K562 (cell line): ENCODE measurements at regions of chr17 and their contacts with region 1.

Region 1: GRCh38 chr17:28763804-28764266 is 20.0 kb downstream of the TRAF4 start:
- DNase-seq: peak; percentile 73 to 87 (median 78)
- ATAC-seq: peak; percentile 86
- H3K4me3 ChIP-seq: no peak overlapping the region
- H3K27ac ChIP-seq: no peak overlapping the region
- H3K4me1 ChIP-seq: peaks cover 3% of the 10 kb centered on the region in 2 experiments; a peak in 2 of 5 replicates
- H3K27me3 ChIP-seq: no peaks in the 10 kb centered on the region
- CTCF ChIP-seq: peak; percentile 83 to 95 (median 91)
- EP300 ChIP-seq: no peak
- POLR2A ChIP-seq: no peak
- RAD21 ChIP-seq: peak; percentile 84 to 92

Region 2: GRCh38 chr17:28667870-28668269 is 96.0 kb before region 1 on chr17:
- CTCF ChIA-PET with region 1: no interaction called
- POLR2A ChIA-PET with region 1: no interaction called
- in situ Hi-C with region 1: no loop called
- intact Hi-C with region 1: no loop called
- DNase-seq: no peak
- ATAC-seq: peak; percentile 29; the same call in 1 of the 3 replicates
- H3K4me3 ChIP-seq: no peak overlapping the region
- H3K27ac ChIP-seq: no peak overlapping the region
- H3K4me1 ChIP-seq: peaks cover 4 to 5% of the 10 kb centered on the region in 2 experiments; a peak in 2 of 5 replicates
- H3K27me3 ChIP-seq: no peaks in the 10 kb centered on the region
- CTCF ChIP-seq: no peak
- EP300 ChIP-seq: no peak
- POLR2A ChIP-seq: no peak
- RAD21 ChIP-seq: no peak

Region 3: GRCh38 chr17:28750178-28751047 is 13.4 kb before region 1 on chr17:
- CTCF ChIA-PET with region 1: no interaction called
- POLR2A ChIA-PET with region 1: interaction called, 47 read pairs
- in situ Hi-C with region 1: no loop called
- intact Hi-C with region 1: no loop called
- DNase-seq: peak; percentile 80 to 98 (median 87)
- ATAC-seq: peak; percentile 87
- H3K4me3 ChIP-seq: no peak overlapping the region
- H3K27ac ChIP-seq: peak overlapping the region; percentile 37; the same call in 2 of the 3 replicates
- H3K4me1 ChIP-seq: peaks cover 20 to 36% of the 10 kb centered on the region in 2 experiments
- H3K27me3 ChIP-seq: no peaks in the 10 kb centered on the region
- CTCF ChIP-seq: peak; percentile 100
- EP300 ChIP-seq: no peak
- POLR2A ChIP-seq: peak; percentile 48; the same call in 1 of the 2 replicates
- RAD21 ChIP-seq: peak; percentile 99

Region 4: GRCh38 chr17:28842282-28843012 is 78.6 kb after region 1 on chr17 and contains the start of gene FAM222B:
- CTCF ChIA-PET with region 1: no interaction called
- POLR2A ChIA-PET with region 1: interaction called, 12 read pairs
- in situ Hi-C with region 1: no loop called
- intact Hi-C with region 1: loop called (anchors 2 kb)
- DNase-seq: peak; percentile 95 to 100 (median 99)
- ATAC-seq: peak; percentile 97
- H3K4me3 ChIP-seq: peak within 1 kb of the TSS; percentile 71
- H3K27ac ChIP-seq: peak within 1 kb of the TSS; percentile 76
- H3K4me1 ChIP-seq: peaks cover 17 to 33% of the 10 kb centered on the region in 2 experiments
- H3K27me3 ChIP-seq: no peaks in the 10 kb centered on the region
- CTCF ChIP-seq: no peak
- EP300 ChIP-seq: no peak
- POLR2A ChIP-seq: peak; percentile 95
- RAD21 ChIP-seq: no peak; a peak in 1 of 4 replicates
- polyA plus RNA-seq, gene FAM222B: 4.0 to 6.7 TPM

Region 5: GRCh38 chr17:28878981-28879380 is 115.1 kb after region 1 on chr17:
- CTCF ChIA-PET with region 1: interaction called, 9 read pairs
- POLR2A ChIA-PET with region 1: interaction called, 3 read pairs
- in situ Hi-C with region 1: no loop called
- intact Hi-C with region 1: loop called (anchors 1 kb)
- DNase-seq: peak; percentile 79 to 87 (median 84)
- ATAC-seq: peak; percentile 92
- H3K4me3 ChIP-seq: no peak overlapping the region
- H3K27ac ChIP-seq: no peak overlapping the region
- H3K4me1 ChIP-seq: peaks cover 31 to 42% of the 10 kb centered on the region in 2 experiments
- H3K27me3 ChIP-seq: no peaks in the 10 kb centered on the region
- CTCF ChIP-seq: peak; percentile 77 to 91 (median 88)
- EP300 ChIP-seq: no peak
- POLR2A ChIP-seq: no peak
- RAD21 ChIP-seq: peak; percentile 58 to 91

Region 6: GRCh38 chr17:28896884-28897768 is 133.3 kb after region 1 on chr17 and contains the start of gene FLOT2:
- CTCF ChIA-PET with region 1: interaction called, 10 read pairs
- POLR2A ChIA-PET with region 1: interaction called, 4 read pairs
- in situ Hi-C with region 1: loop called (anchors 5 kb)
- intact Hi-C with region 1: loop called (anchors 5 kb)
- DNase-seq: peak; percentile 84 to 88 (median 86)
- ATAC-seq: peak; percentile 88
- H3K4me3 ChIP-seq: peak within 1 kb of the TSS; percentile 95
- H3K27ac ChIP-seq: peak within 1 kb of the TSS; percentile 91
- H3K4me1 ChIP-seq: peaks cover 38 to 48% of the 10 kb centered on the region in 2 experiments
- H3K27me3 ChIP-seq: no peaks in the 10 kb centered on the region
- CTCF ChIP-seq: peak in 2 of 3 experiments; percentile 32 to 66; a peak in 5 of 6 replicates
- EP300 ChIP-seq: no peak
- POLR2A ChIP-seq: peak; percentile 85
- RAD21 ChIP-seq: peak; percentile 5 to 31
- polyA plus RNA-seq, gene FLOT2: 17.5 to 30.1 TPM

Region 7: GRCh38 chr17:28902819-28903545 is 139.1 kb after region 1 on chr17 and contains the start of gene DHRS13:
- CTCF ChIA-PET with region 1: interaction called, 10 read pairs
- POLR2A ChIA-PET with region 1: interaction called, 4 read pairs
- in situ Hi-C with region 1: loop called (anchors 5 kb)
- intact Hi-C with region 1: loop called (anchors 5 kb)
- DNase-seq: peak; percentile 95 to 98 (median 96)
- ATAC-seq: peak; percentile 88
- H3K4me3 ChIP-seq: peak within 1 kb of the TSS; percentile 81
- H3K27ac ChIP-seq: peak within 1 kb of the TSS; percentile 85
- H3K4me1 ChIP-seq: peaks cover 69 to 72% of the 10 kb centered on the region in 2 experiments; a peak in 4 of 5 replicates
- H3K27me3 ChIP-seq: no peaks in the 10 kb centered on the region
- CTCF ChIP-seq: peak; percentile 99
- EP300 ChIP-seq: peak; percentile 72
- POLR2A ChIP-seq: peak; percentile 20; the same call in 1 of the 2 replicates
- RAD21 ChIP-seq: peak; percentile 80 to 87
- polyA plus RNA-seq, gene DHRS13: 0.32 TPM in 1 of 2 experiments, not detected in the other

Region 8: GRCh38 chr17:28916302-28916934 is 152.6 kb after region 1 on chr17:
- CTCF ChIA-PET with region 1: interaction called, 3 read pairs
- POLR2A ChIA-PET with region 1: no interaction called
- in situ Hi-C with region 1: no loop called
- intact Hi-C with region 1: loop called (anchors 1 kb)
- DNase-seq: peak in 2 of 4 experiments; percentile 44 to 73
- ATAC-seq: peak; percentile 82
- H3K4me3 ChIP-seq: no peak overlapping the region
- H3K27ac ChIP-seq: no peak overlapping the region; the same call in 2 of the 3 replicates
- H3K4me1 ChIP-seq: peaks cover 17 to 18% of the 10 kb centered on the region in 2 experiments
- H3K27me3 ChIP-seq: no peaks in the 10 kb centered on the region
- CTCF ChIP-seq: peak; percentile 73 to 82 (median 76)
- EP300 ChIP-seq: no peak
- POLR2A ChIP-seq: no peak
- RAD21 ChIP-seq: peak; percentile 76 to 84